Endothelial cell of umbilical vein (primary cell): ENCODE measurements at regions of chr2 and their contacts with region 1.

Region 1: GRCh38 chr2:144449028-144449406 is 70.9 kb downstream of the ZEB2 start:
- DNase-seq: no peak
- H3K4me3 ChIP-seq: no peak overlapping the region
- H3K27ac ChIP-seq: no peak overlapping the region
- H3K4me1 ChIP-seq: peaks cover 26% of the 10 kb centered on the region
- H3K27me3 ChIP-seq: no peaks in the 10 kb centered on the region
- CTCF ChIP-seq: peak; percentile 8 to 12
- POLR2A ChIP-seq: no peak

Region 2: GRCh38 chr2:144350151-144350802 is 98.7 kb before region 1 on chr2:
- CTCF ChIA-PET with region 1: interaction called, 4 read pairs
- POLR2A ChIA-PET with region 1: no interaction called
- dilution Hi-C with region 1: no loop called
- intact Hi-C with region 1: loop called (anchors 1 kb)
- DNase-seq: peak; percentile 99
- H3K4me3 ChIP-seq: peak overlapping the region in 2 of 3 experiments; percentile 0 to 9
- H3K27ac ChIP-seq: peak overlapping the region; percentile 79
- H3K4me1 ChIP-seq: peaks cover 32% of the 10 kb centered on the region
- H3K27me3 ChIP-seq: no peaks in the 10 kb centered on the region
- CTCF ChIP-seq: no peak
- POLR2A ChIP-seq: no peak

Region 3: GRCh38 chr2:144357623-144358373 is 91.2 kb before region 1 on chr2:
- CTCF ChIA-PET with region 1: interaction called, 4 read pairs
- POLR2A ChIA-PET with region 1: no interaction called
- dilution Hi-C with region 1: no loop called
- intact Hi-C with region 1: loop called (anchors 2 kb)
- DNase-seq: peak; percentile 92
- H3K4me3 ChIP-seq: no peak overlapping the region
- H3K27ac ChIP-seq: peak overlapping the region; percentile 82
- H3K4me1 ChIP-seq: peaks cover 15% of the 10 kb centered on the region
- H3K27me3 ChIP-seq: no peaks in the 10 kb centered on the region
- CTCF ChIP-seq: no peak
- POLR2A ChIP-seq: no peak

Region 4: GRCh38 chr2:144438801-144439631 is 10.0 kb before region 1 on chr2:
- CTCF ChIA-PET with region 1: interaction called, 29 read pairs
- POLR2A ChIA-PET with region 1: no interaction called
- dilution Hi-C with region 1: no loop called
- intact Hi-C with region 1: no loop called
- DNase-seq: no peak
- H3K4me3 ChIP-seq: no peak overlapping the region
- H3K27ac ChIP-seq: no peak overlapping the region
- H3K4me1 ChIP-seq: peaks cover 12% of the 10 kb centered on the region
- H3K27me3 ChIP-seq: no peaks in the 10 kb centered on the region
- CTCF ChIP-seq: no peak
- POLR2A ChIP-seq: no peak

Region 5: GRCh38 chr2:144943986-144944385 is 495.0 kb after region 1 on chr2:
- CTCF ChIA-PET with region 1: no interaction called
- POLR2A ChIA-PET with region 1: no interaction called
- dilution Hi-C with region 1: no loop called
- intact Hi-C with region 1: loop called (anchors 1 kb)
- DNase-seq: peak; percentile 78
- H3K4me3 ChIP-seq: no peak overlapping the region
- H3K27ac ChIP-seq: peak overlapping the region; percentile 95
- H3K4me1 ChIP-seq: peaks cover 49% of the 10 kb centered on the region
- H3K27me3 ChIP-seq: no peaks in the 10 kb centered on the region
- CTCF ChIP-seq: no peak
- POLR2A ChIP-seq: no peak